Aorta (tissue), 5 donors: ENCODE measurements at regions of chr3 and their contacts with region 1.

Region 1: GRCh38 chr3:115401298-115401697 is 222.0 kb upstream of the GAP43 start:
- DNase-seq: no peak
- ATAC-seq: peak; percentile 86
- H3K4me3 ChIP-seq: no peak overlapping the region
- H3K27ac ChIP-seq: peak overlapping the region in 1 of 2 donors; percentile 82
- H3K4me1 ChIP-seq: peaks cover 5% of the 10 kb centered on the region in 2 donors
- H3K27me3 ChIP-seq: no peaks in the 10 kb centered on the region

Region 2: DNA sequence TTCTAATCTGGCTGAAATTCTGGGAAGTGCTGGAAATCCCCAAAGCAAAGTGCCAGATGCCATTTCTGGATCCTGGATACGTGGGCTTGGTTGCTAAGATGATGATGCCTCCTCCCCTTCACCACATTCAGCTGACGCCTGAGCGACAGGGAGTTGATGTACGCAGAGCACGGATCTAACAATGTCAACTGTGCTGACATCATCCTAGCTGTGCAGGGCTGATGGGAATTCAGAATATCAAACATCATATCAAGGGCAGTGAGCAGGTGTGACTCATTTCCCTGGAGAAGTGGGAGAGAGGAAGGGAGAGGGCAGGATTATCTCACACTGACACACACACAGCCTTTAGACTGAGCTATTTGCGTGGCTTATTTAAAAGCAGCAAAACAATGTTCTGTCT is 161.6 kb before region 1 on chr3:
- intact Hi-C with region 1: loop called (anchors 5 to 10 kb)
- DNase-seq: peak; percentile 74 to 79
- ATAC-seq: peak; percentile 89
- H3K4me3 ChIP-seq: peak overlapping the region in 1 of 2 donors; percentile 34
- H3K27ac ChIP-seq: peak overlapping the region in 1 of 2 donors; percentile 40
- H3K4me1 ChIP-seq: peaks cover 0 to 3% of the 10 kb centered on the region in 2 donors
- H3K27me3 ChIP-seq: no peaks in the 10 kb centered on the region

Region 3: GRCh38 chr3:115475178-115476041 is 74.1 kb after region 1 on chr3:
- intact Hi-C with region 1: no loop called
- DNase-seq: no peak
- ATAC-seq: no peak
- H3K4me3 ChIP-seq: no peak overlapping the region
- H3K27ac ChIP-seq: no peak overlapping the region
- H3K4me1 ChIP-seq: no peaks in the 10 kb centered on the region
- H3K27me3 ChIP-seq: no peaks in the 10 kb centered on the region

Region 4: DNA sequence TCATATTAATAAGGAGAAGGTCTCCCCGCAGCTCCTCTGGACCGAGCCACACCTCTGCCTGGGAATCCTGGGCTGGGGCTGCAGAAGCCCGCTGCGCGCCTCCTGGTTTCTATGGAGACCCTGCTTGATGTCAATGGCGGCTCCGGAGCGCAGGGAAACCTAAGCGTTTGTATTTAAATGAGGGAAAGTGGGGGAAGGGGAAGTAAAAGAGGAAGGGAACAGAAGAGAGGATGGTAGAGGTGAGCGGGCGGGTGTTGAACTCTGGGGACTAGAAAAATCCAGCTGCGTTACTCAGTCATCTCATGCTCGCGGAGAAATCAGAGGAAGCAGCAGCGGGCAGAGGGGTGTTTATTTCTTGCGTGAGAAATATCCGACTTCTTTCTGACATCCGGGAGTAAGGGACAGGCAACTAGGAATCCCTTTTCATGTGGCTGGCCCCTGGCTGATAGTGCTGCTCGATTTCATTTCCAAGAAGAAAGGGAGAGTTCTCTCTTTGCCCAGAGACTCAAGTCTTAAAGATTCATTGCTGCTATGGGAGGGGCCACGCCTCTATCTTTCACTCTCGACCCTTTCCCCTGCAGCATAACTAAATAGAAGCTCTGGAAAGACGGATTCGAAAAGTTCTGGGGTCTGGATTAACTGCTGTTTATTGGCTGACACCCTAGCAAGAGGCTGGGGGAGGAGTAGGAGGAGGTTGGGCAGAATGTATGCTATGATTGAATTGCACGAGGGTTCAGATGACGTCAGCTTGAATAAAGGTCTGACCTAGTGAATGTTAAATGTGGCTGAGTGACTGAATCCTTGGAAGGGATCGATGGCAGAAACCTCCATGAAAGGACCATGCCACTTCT is 111.5 kb after region 1 on chr3:
- intact Hi-C with region 1: loop called in 1 of 2 experiments (anchors 10 kb)
- DNase-seq: peak; percentile 59 to 73
- ATAC-seq: peak; percentile 36
- H3K4me3 ChIP-seq: peak overlapping the region; percentile 13 to 33
- H3K27ac ChIP-seq: no peak overlapping the region
- H3K4me1 ChIP-seq: no peaks in the 10 kb centered on the region
- H3K27me3 ChIP-seq: no peaks in the 10 kb centered on the region

Region 5: DNA sequence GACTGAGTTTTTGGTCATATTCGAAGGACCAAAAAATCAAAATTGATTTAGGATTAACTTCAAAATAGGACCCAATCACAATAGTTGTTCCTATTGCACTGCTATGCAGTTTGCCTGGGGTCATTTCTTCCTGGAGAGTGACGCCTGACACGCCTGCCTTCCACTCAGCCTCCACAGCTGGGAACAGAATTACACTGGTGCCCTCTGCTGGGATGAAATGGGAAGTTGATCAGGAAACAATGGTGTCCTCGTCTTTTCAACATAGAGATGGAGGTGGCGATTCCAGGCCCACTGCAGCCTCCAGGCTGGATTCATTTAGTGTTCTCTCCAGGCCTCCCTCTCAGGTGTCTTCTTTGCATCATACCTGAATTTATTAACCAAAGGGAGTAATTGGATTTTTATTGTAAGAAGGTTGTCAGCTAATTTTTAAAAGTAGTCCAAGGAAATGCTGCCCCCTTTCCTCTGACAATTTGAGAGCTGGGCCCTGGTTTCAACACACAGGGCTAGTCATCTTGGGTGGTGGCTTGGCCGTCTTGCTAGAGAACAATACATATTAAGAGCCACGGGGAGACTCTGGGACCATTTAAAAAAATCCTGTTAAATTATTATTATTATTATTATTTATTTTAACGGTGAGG is 291.7 kb after region 1 on chr3:
- intact Hi-C with region 1: loop called in 1 of 2 experiments (anchors 10 kb)
- DNase-seq: peak; percentile 77 to 78
- ATAC-seq: peak; percentile 91
- H3K4me3 ChIP-seq: no peak overlapping the region
- H3K27ac ChIP-seq: no peak overlapping the region
- H3K4me1 ChIP-seq: no peaks in the 10 kb centered on the region
- H3K27me3 ChIP-seq: no peaks in the 10 kb centered on the region